Endothelial cell of umbilical vein (primary cell): ENCODE measurements at regions of chr12 and their contacts with region 1.

Region 1: GRCh38 chr12:40946612-40947194 is 241.4 kb upstream of the PDZRN4 start:
- DNase-seq: peak; percentile 55
- H3K4me3 ChIP-seq: no peak overlapping the region
- H3K27ac ChIP-seq: no peak overlapping the region
- H3K4me1 ChIP-seq: no peaks in the 10 kb centered on the region
- H3K27me3 ChIP-seq: no peaks in the 10 kb centered on the region
- CTCF ChIP-seq: peak in 1 of 2 donors; percentile 41
- POLR2A ChIP-seq: no peak

Region 2: DNA sequence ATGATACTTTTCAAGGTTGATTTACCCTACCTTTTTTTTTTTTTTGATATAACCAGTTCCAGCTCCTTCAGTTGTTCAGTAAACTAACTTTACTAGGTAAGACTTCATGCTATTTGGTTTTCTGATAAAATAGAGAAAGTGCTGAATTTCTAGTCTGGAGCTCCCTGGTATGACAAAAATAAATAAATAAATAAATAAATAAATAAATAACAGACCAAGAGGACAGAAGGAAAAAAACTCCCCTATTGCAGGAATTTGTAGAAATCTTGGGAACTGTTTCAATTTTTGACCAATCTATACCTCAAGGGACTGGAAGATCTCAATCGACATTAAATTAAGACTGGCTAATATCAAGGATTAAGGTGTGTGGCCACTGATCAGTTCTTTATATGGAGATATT is 10.7 kb after region 1 on chr12:
- CTCF ChIA-PET with region 1: interaction called, 16 read pairs
- POLR2A ChIA-PET with region 1: no interaction called
- dilution Hi-C with region 1: no loop called
- intact Hi-C with region 1: no loop called
- DNase-seq: no peak
- H3K4me3 ChIP-seq: no peak overlapping the region
- H3K27ac ChIP-seq: no peak overlapping the region
- H3K4me1 ChIP-seq: no peaks in the 10 kb centered on the region
- H3K27me3 ChIP-seq: no peaks in the 10 kb centered on the region
- CTCF ChIP-seq: no peak
- POLR2A ChIP-seq: no peak

Region 3: GRCh38 chr12:42104087-42104486 is 1157.4 kb after region 1 on chr12:
- CTCF ChIA-PET with region 1: interaction called, 6 read pairs
- POLR2A ChIA-PET with region 1: no interaction called
- dilution Hi-C with region 1: no loop called
- intact Hi-C with region 1: loop called (anchors 5 kb)
- DNase-seq: no peak
- H3K4me3 ChIP-seq: no peak overlapping the region
- H3K27ac ChIP-seq: no peak overlapping the region
- H3K4me1 ChIP-seq: no peaks in the 10 kb centered on the region
- H3K27me3 ChIP-seq: no peaks in the 10 kb centered on the region
- CTCF ChIP-seq: peak in 1 of 2 donors; percentile 5
- POLR2A ChIP-seq: no peak